ENCODE measurements at regions of chr7 and their contacts with region 1.

Region 1: DNA sequence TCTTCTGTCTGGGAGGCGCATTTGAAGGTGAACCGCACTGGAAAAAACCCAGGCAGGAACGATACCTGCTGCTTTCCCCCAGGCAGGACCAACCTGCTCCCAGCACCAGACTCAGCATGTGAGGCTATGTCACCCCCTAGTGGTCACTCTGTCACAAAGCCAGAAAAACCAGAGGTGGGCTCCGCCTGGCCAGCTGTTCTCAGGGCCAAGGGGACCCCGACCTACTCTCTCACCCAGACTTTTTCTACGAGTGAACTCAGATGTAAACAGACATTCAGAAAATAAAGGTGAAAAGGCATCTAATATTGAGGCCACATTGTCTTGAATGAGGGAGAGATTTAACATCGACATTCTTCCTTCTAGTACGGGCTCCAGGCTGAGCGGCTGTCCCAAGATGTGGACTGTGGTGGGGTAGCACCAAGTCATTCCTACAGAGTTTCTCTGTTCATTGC is 117.3 kb downstream of the PRKAG2 start:
- DNase-seq: peak; percentile 58 to 69 (median 66)
- ATAC-seq: peak; percentile 68
- H3K4me3 ChIP-seq: no peak overlapping the region
- H3K27ac ChIP-seq: no peak overlapping the region
- H3K4me1 ChIP-seq: peaks cover 6% of the 10 kb centered on the region
- H3K27me3 ChIP-seq: no peaks in the 10 kb centered on the region
- CTCF ChIP-seq: peak; percentile 73 to 84 (median 78)
- POLR2A ChIP-seq: no peak

Region 2: GRCh38 chr7:151261529-151261928 is 498.1 kb before region 1 on chr7:
- intact Hi-C with region 1: no loop called
- DNase-seq: no peak
- ATAC-seq: no peak
- H3K4me3 ChIP-seq: no peak overlapping the region
- H3K27ac ChIP-seq: no peak overlapping the region
- H3K4me1 ChIP-seq: no peaks in the 10 kb centered on the region
- H3K27me3 ChIP-seq: no peaks in the 10 kb centered on the region
- CTCF ChIP-seq: no peak
- POLR2A ChIP-seq: no peak

Region 3: DNA sequence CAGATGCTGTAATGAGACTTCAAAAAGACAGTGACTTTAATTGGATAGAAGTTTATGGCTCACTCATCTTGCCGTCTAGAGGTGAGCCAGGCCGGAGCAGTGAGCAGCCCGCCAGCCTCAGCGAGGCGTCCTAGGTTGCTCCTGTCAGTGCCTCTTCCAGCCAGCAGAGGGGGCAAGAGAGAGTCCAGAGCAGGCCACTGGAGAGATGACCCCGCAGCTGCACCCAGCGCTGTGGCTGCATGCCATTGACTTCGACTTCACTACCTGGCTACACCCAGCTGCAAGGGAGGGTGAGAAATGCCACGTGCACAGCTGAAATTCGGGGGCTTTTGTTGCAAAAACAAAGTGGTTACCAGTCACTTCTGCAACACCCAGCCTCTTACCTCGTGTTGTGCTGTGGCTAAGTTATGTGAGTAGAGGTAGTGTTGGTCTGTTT is 391.5 kb before region 1 on chr7:
- intact Hi-C with region 1: loop called (anchors 10 kb)
- DNase-seq: peak; percentile 83 to 90 (median 88)
- ATAC-seq: peak; percentile 91
- H3K4me3 ChIP-seq: no peak overlapping the region
- H3K27ac ChIP-seq: no peak overlapping the region
- H3K4me1 ChIP-seq: peaks cover 7% of the 10 kb centered on the region
- H3K27me3 ChIP-seq: no peaks in the 10 kb centered on the region
- CTCF ChIP-seq: peak; percentile 83 to 95 (median 89)
- POLR2A ChIP-seq: no peak

Region 4: DNA sequence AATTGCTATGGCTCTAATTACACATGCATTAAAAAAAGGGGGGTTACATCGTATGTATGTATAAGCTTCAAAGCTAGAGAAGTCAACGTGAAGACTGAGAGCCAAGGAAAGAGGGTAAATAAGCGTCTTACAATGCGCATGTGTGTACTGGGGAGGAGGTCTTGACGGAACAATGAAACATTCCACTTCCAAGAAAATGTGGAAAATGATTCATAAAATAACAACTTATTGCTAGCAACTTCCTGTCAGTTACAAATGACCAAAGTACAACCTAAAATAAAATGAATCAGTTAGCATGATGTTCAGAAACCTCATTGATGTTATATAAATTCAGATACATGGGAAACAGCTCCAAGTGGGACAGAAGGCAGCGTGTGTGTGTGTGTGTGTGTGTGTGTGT is 135.9 kb before region 1 on chr7:
- intact Hi-C with region 1: loop called (anchors 5 kb)
- DNase-seq: no peak
- ATAC-seq: no peak
- H3K4me3 ChIP-seq: no peak overlapping the region
- H3K27ac ChIP-seq: no peak overlapping the region
- H3K4me1 ChIP-seq: peaks cover 8% of the 10 kb centered on the region
- H3K27me3 ChIP-seq: no peaks in the 10 kb centered on the region
- CTCF ChIP-seq: no peak
- POLR2A ChIP-seq: no peak

Measured in body of pancreas (tissue), 4 donors.